ENCODE measurements at regions of chr2 and their contacts with region 1.

Region 1: DNA sequence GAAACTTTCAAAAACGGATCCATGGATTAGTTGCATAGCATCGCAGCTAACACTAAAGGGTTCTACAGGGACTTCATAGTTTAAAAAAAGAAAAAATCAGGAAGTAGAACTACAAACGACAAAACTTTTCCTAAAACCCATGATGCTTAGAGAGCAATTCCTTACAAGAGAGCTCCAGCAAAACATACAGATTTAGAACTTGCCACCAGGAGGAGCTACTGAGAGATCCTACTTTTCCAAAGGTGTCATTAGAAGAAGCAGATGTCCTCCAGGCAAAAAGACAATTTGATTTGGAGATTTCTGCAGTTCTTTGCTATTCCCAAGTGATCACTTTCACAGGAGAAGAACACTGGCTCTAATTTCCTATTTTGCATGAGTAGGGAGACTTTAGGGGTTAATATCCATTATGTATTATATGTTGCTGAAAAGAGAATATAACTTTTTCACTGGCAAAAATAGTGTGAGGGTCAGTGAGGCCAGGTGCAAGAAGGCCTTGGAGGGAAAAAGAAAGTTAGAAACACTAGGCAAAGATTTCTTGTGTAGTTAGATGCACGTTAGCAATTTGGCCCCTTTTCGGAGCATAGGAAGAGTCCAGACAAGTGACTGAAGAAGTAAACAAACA is 436.2 kb downstream of the SUCLG1 start:
- DNase-seq: no peak
- ATAC-seq: no peak
- H3K4me3 ChIP-seq: no peak overlapping the region
- H3K27ac ChIP-seq: no peak overlapping the region
- H3K4me1 ChIP-seq: no peaks in the 10 kb centered on the region
- H3K27me3 ChIP-seq: no peaks in the 10 kb centered on the region

Region 2: GRCh38 chr2:84126530-84126929 is 103.6 kb after region 1 on chr2:
- intact Hi-C with region 1: no loop called
- DNase-seq: no peak
- ATAC-seq: no peak
- H3K4me3 ChIP-seq: no peak overlapping the region
- H3K27ac ChIP-seq: no peak overlapping the region
- H3K4me1 ChIP-seq: no peaks in the 10 kb centered on the region
- H3K27me3 ChIP-seq: no peaks in the 10 kb centered on the region

Region 3: DNA sequence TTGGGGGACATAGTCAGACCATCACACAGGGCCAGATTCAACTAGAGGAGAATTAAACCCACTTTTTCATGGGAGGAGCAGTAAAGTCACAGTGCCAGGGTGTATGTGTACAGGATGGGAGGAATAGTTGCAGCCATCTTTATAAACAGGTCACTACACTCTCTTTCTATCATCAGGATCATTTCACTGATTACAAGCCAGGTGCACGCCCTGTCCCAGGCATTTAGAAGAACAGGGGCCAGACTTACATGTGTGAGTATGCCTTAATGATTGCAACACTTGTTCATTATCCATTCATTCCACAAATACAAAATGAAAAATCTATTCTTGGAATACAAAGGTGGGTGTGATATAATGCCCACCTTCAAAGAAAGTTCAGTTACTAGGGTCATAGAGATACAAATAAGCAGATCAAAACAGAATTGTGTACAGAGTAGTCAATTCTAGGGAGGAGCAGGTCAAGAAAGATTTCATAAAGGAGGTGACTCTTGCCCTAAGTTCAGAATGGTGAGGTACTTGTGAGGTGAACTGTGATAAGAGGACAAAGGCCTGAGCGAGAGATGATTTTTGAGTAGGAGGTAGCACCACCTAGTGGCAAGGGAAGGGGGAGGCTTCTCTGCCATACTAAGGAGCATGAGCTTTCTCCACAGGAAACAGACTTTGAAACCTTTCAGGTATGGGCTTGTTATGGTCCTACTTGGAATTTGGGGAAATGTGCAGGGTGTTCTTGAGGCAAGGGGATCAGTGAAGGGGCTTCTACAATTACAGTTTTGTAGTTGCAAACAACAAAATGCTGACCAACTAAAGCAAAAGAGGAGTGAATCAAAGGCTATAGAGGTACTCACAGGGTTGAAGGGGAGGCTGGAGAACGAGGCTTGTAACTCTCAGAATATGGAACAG is 279.8 kb after region 1 on chr2:
- intact Hi-C with region 1: loop called in 1 of 4 experiments (anchors 10 kb)
- DNase-seq: no peak
- ATAC-seq: peak; percentile 65 to 75
- H3K4me3 ChIP-seq: no peak overlapping the region
- H3K27ac ChIP-seq: no peak overlapping the region
- H3K4me1 ChIP-seq: no peaks in the 10 kb centered on the region
- H3K27me3 ChIP-seq: no peaks in the 10 kb centered on the region

Measured in right cardiac atrium (tissue), 5 donors.